WTC11 (cell line): ENCODE measurements at regions of chr11 and their contacts with region 1.

Region 1: GRCh38 chr11:6531267-6531752 is 34.2 kb downstream of the DNHD1 start:
- DNase-seq: no peak
- ATAC-seq: peak; percentile 90
- H3K4me3 Mint-ChIP-seq: no peak overlapping the region
- H3K27ac Mint-ChIP-seq: no peak overlapping the region
- H3K4me1 Mint-ChIP-seq: no peaks in the 10 kb centered on the region
- H3K27me3 Mint-ChIP-seq: no peaks in the 10 kb centered on the region; the same call in 1 of the 2 replicates
- CTCF ChIP-seq: peak; percentile 19; the same call in 1 of the 2 replicates

Region 2: GRCh38 chr11:6411594-6412031 is 119.7 kb before region 1 on chr11:
- CTCF ChIA-PET with region 1: no interaction called
- POLR2A ChIA-PET with region 1: no interaction called
- DNase-seq: no peak
- ATAC-seq: no peak
- H3K4me3 Mint-ChIP-seq: no peak overlapping the region
- H3K27ac Mint-ChIP-seq: no peak overlapping the region
- H3K4me1 Mint-ChIP-seq: peaks cover 9% of the 10 kb centered on the region; the same call in 1 of the 2 replicates
- H3K27me3 Mint-ChIP-seq: no peaks in the 10 kb centered on the region
- CTCF ChIP-seq: no peak

Region 3: DNA sequence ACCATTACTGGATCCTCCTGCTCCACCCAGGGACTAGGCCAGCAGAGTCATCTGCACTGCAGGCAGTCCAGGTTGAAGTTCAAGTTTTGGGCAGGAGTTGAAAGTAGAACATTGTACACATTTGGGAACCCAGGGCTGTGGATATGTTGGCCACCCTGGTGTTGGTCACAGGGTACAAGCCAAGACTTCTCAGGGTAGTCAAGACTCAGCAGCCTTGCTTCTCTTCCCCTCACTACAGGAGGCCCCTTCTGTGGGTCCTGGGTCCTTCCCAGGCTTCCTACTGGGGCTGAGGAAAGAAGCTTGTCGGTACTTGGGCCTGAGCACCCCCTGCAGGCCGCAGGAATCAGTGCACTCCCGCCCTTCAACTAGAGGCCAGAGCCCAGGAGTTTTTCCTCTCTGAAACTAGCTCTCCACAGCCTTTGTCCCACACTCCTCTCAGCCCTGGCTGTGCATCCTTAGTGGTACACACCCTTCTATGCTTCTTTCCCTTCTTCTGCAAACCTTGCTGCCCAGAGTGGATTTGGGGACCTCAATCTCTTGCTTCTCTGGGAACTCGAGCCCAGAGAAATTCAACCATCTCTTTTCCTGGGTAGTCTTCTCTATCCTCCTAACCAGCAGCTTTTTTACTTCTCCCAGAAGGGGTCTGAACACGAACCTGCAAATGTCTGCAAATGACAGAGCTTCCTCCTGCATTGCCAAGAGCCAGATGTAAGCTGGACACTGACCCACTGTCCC is 87.9 kb before region 1 on chr11:
- CTCF ChIA-PET with region 1: interaction called, 14 read pairs
- POLR2A ChIA-PET with region 1: no interaction called
- DNase-seq: peak; percentile 68
- ATAC-seq: peak; percentile 90
- H3K4me3 Mint-ChIP-seq: no peak overlapping the region
- H3K27ac Mint-ChIP-seq: no peak overlapping the region
- H3K4me1 Mint-ChIP-seq: no peaks in the 10 kb centered on the region
- H3K27me3 Mint-ChIP-seq: no peaks in the 10 kb centered on the region
- CTCF ChIP-seq: peak; percentile 80

Region 4: GRCh38 chr11:6498121-6498520 is 33.2 kb before region 1 on chr11:
- CTCF ChIA-PET with region 1: interaction called, 12 read pairs
- POLR2A ChIA-PET with region 1: no interaction called
- DNase-seq: no peak
- ATAC-seq: no peak
- H3K4me3 Mint-ChIP-seq: no peak overlapping the region
- H3K27ac Mint-ChIP-seq: no peak overlapping the region
- H3K4me1 Mint-ChIP-seq: peaks cover 9% of the 10 kb centered on the region
- H3K27me3 Mint-ChIP-seq: no peaks in the 10 kb centered on the region
- CTCF ChIP-seq: no peak

Region 5: GRCh38 chr11:6572215-6572614 is 40.9 kb after region 1 on chr11:
- CTCF ChIA-PET with region 1: interaction called, 20 read pairs
- POLR2A ChIA-PET with region 1: no interaction called
- DNase-seq: no peak
- ATAC-seq: no peak
- H3K4me3 Mint-ChIP-seq: no peak overlapping the region
- H3K27ac Mint-ChIP-seq: no peak overlapping the region
- H3K4me1 Mint-ChIP-seq: peaks cover 7% of the 10 kb centered on the region
- H3K27me3 Mint-ChIP-seq: no peaks in the 10 kb centered on the region; the same call in 1 of the 2 replicates
- CTCF ChIP-seq: no peak

Region 6: DNA sequence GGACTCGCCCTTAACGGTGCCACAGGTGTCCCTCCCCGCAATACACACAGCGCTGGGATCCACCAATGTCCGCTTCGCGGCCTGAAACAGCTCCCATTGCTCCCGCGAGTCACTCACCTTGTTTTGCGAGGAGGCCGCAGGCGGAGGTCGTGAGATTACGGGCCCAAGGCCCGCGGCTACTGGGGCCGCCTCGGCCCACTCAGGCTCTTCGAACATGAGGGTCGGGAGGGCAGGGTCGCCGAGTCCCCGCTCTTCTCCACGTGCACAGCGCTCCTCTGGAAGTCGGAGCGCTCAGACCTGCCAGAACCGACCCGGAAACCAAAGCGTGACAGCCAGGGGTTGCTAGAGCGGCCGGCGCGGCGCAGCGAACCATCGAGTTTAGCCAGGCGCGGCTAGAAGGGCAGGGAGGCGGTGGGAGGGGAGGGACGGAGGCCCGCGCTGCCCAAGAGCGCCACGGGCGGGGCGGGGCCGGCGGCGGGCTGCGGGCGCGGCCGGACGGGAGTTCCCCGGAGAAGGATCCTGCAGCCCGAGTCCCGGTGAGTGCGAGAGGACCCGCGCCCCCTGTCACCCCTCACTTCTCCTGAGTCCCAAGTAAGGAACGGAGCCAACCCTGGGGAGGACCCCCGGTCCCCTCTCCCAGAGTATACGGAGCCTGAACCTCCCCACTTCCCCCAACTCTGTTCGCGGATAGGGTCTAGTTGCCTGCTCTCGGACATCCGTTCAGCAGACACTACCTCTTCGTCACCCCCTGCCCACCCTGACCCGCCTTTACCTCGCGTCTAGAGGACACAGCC is 72.2 kb after region 1 on chr11 and contains the starts of genes ILK and RRP8:
- CTCF ChIA-PET with region 1: interaction called, 12 read pairs
- POLR2A ChIA-PET with region 1: interaction called, 4 read pairs
- DNase-seq: peak; percentile 93
- ATAC-seq: peak; percentile 79
- H3K4me3 Mint-ChIP-seq: no peak within 1 kb of the TSS
- H3K27ac Mint-ChIP-seq: no peak within 1 kb of the TSS
- H3K4me1 Mint-ChIP-seq: peaks cover 14% of the 10 kb centered on the region
- H3K27me3 Mint-ChIP-seq: no peaks in the 10 kb centered on the region
- CTCF ChIP-seq: no peak
- total RNA-seq, gene ILK: 97.7 to 112 TPM (median 110 TPM) in 3 replicates
- total RNA-seq, gene RRP8: 12.5 to 15.0 TPM (median 14.6 TPM) in 3 replicates

Region 7: DNA sequence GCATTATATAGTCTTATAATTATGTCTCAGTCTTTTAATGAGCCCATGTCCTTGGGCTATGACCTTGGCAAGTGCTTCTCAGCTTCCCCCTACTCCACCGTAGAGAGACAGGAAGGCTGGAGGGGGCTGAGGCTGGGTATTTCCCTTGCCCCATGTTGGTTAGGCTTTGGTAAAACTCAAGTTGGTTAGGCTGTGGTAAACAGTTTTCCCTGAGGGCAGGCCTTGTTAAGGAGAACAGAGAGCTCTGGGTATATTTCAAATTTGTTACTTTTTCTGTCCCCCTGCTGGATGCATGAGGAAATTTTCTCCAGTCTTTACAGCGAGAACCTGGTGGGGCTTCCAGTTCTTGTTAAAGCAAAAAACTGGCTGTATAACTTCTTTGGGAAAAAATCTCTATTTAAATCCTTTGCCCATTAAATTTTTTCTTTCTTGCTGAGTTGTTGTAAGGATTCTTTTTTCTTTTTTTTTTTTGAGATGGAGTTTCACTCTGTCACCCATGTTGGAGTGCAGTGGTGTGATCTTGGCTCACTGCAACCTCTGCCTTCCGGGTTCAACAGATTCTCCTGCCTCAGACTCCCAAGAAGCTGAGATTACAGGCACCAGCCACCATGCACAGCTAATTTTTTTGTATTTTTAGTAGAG is 136.5 kb after region 1 on chr11:
- CTCF ChIA-PET with region 1: interaction called, 17 read pairs
- POLR2A ChIA-PET with region 1: no interaction called
- DNase-seq: no peak
- ATAC-seq: peak; percentile 96
- H3K4me3 Mint-ChIP-seq: no peak overlapping the region
- H3K27ac Mint-ChIP-seq: no peak overlapping the region
- H3K4me1 Mint-ChIP-seq: no peaks in the 10 kb centered on the region
- H3K27me3 Mint-ChIP-seq: peaks cover 2% of the 10 kb centered on the region; the same call in 1 of the 2 replicates
- CTCF ChIP-seq: peak; percentile 64

Region 8: DNA sequence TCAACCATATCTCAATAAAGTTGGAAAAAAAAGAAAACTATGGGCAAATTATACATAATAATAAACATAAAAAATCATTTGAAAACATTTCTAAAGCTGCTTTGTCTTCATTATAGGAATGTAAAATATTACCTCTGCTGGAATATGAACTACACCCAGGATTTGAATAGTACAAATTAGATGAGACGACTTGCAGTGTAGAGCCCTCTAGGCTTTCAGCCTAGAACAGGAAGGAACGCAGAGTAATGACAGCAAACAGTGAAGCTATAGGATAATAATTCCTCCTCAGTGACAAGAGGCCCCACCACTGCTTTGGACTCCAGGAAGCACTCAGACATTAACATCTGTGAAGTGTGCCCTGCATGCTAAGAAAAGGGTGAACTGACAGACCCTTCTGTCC is 259.2 kb after region 1 on chr11:
- CTCF ChIA-PET with region 1: no interaction called
- POLR2A ChIA-PET with region 1: no interaction called
- DNase-seq: no peak
- ATAC-seq: no peak
- H3K4me3 Mint-ChIP-seq: no peak overlapping the region
- H3K27ac Mint-ChIP-seq: no peak overlapping the region
- H3K4me1 Mint-ChIP-seq: no peaks in the 10 kb centered on the region
- H3K27me3 Mint-ChIP-seq: no peaks in the 10 kb centered on the region; the same call in 1 of the 2 replicates
- CTCF ChIP-seq: no peak